ENCODE measurements at regions of chr7 and their contacts with region 1.

Region 1: GRCh38 chr7:28096713-28097112 is 83.9 kb downstream of the JAZF1 start:
- DNase-seq: peak; percentile 81
- H3K4me3 ChIP-seq: no peak overlapping the region
- H3K27ac ChIP-seq: peak overlapping the region; percentile 23 to 43
- H3K4me1 ChIP-seq: peaks cover 28% of the 10 kb centered on the region
- H3K27me3 ChIP-seq: no peaks in the 10 kb centered on the region
- CTCF ChIP-seq: peak; percentile 86 to 94 (median 90)
- POLR2A ChIP-seq: no peak

Region 2: GRCh38 chr7:27739909-27740448 is 356.7 kb before region 1 on chr7 and contains the start of gene TAX1BP1:
- intact Hi-C with region 1: loop called (anchors 10 kb)
- DNase-seq: peak; percentile 97
- H3K4me3 ChIP-seq: peak within 1 kb of the TSS; percentile 92 to 99
- H3K27ac ChIP-seq: peak within 1 kb of the TSS; percentile 94
- H3K4me1 ChIP-seq: peaks cover 20% of the 10 kb centered on the region
- H3K27me3 ChIP-seq: no peaks in the 10 kb centered on the region
- CTCF ChIP-seq: no peak
- POLR2A ChIP-seq: peak; percentile 98
- total RNA-seq, gene TAX1BP1: 154 to 155 TPM